ENCODE measurements at regions of chr3 and their contacts with region 1.

Region 1: GRCh38 chr3:48989796-48990635 is at the start of gene P4HTM:
- DNase-seq: peak; percentile 77
- CTCF ChIP-seq: peak; percentile 23

Region 2: DNA sequence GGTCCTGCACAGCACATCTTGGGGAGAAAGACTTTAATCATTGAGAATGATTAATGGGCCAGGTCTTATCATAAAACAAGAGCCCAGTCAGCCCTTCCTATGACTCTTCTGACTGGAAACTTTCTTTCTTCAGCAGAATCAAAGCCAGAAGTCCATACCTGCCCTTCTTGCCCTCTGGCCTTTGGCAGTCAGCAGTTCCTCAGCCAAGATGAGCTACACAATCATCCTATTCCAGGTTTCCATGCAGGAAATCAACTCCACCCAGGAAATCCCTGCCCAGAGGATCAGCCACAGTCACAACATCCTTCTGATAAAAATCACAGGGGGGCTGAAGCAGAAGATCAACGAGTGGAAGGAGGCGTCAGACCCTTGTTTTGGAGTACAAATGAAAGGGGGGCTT is 722.2 kb before region 1 on chr3:
- CTCF ChIA-PET with region 1: no interaction called
- POLR2A ChIA-PET with region 1: no interaction called
- DNase-seq: no peak
- CTCF ChIP-seq: no peak

Region 3: DNA sequence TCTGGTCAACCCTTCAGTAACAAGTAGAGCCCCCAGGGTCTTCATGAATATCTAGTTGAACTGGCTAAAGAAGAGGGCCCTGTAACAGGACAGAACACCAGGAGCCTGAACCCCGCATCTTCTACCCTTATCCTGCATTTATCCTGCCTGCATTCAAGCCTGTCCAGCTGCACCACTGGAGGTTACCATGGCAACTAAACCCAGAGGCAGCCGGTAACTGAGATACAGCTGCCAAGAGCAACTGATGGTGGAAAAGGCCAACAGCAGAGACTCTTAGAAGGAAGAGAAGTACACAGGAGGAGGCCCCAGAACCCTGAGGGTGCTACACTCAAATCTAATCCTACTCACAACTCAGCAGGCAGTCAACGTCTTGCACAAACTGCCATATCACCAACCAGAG is 138.6 kb before region 1 on chr3:
- CTCF ChIA-PET with region 1: no interaction called
- POLR2A ChIA-PET with region 1: no interaction called
- DNase-seq: no peak
- CTCF ChIP-seq: no peak

Region 4: GRCh38 chr3:48918388-48919214 is 71.4 kb before region 1 on chr3 and contains the start of gene ARIH2:
- CTCF ChIA-PET with region 1: interaction called, 4 read pairs
- POLR2A ChIA-PET with region 1: interaction called, 15 read pairs
- DNase-seq: peak; percentile 97
- CTCF ChIP-seq: peak; percentile 34

Region 5: GRCh38 chr3:49007068-49007770 is 17.2 kb after region 1 on chr3 and contains the start of gene WDR6:
- CTCF ChIA-PET with region 1: interaction called, 57 read pairs
- POLR2A ChIA-PET with region 1: interaction called, 7 read pairs
- DNase-seq: peak; percentile 98
- CTCF ChIP-seq: peak; percentile 50

Region 6: GRCh38 chr3:49021813-49022687 is 32.0 kb after region 1 on chr3 and contains the start of gene NDUFAF3:
- CTCF ChIA-PET with region 1: interaction called, 30 read pairs
- POLR2A ChIA-PET with region 1: interaction called, 4 read pairs
- DNase-seq: peak; percentile 90
- CTCF ChIP-seq: peak; percentile 99

Region 7: DNA sequence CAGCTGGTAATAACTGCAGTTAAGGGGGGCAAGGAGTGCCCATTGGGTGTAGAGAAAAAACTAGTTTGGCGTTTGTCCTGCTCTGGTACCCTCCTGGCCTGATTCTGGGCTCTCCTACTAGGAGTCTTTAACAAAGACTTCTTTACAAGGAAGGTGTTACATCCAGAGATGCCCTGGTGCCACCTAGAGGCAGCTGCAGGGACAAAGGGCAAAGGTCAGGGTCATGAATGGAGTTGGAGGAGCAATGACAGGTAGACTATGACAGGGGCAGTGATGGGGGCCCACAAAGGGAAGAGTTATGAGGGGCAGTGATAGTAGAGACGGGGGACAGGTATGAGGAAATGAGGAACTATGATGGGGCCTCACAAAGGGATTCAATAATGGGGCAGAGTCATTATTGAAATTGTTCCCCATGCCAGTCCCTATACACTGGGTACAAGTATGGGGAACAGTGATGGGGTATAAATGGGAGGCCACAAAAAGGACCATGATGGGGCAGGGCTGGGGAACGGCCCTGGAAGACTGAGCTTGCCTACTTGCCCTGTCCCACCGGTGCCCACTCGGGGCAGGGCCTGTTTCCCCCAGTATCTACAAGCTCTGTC is 168.2 kb after region 1 on chr3:
- CTCF ChIA-PET with region 1: interaction called, 10 read pairs
- POLR2A ChIA-PET with region 1: no interaction called
- DNase-seq: no peak
- CTCF ChIP-seq: peak; percentile 57

Region 8: GRCh38 chr3:49213541-49213943 is 223.5 kb after region 1 on chr3:
- CTCF ChIA-PET with region 1: no interaction called
- POLR2A ChIA-PET with region 1: no interaction called
- DNase-seq: no peak
- CTCF ChIP-seq: no peak

Region 9: GRCh38 chr3:49454458-49454857 is 464.4 kb after region 1 on chr3:
- CTCF ChIA-PET with region 1: interaction called, 16 read pairs
- POLR2A ChIA-PET with region 1: no interaction called
- DNase-seq: peak; percentile 12
- CTCF ChIP-seq: peak; percentile 36

Measured in GM10248 (cell line).